Activated CD4-positive, alpha-beta T cell treated with anti-CD3 and anti-CD28 coated beads, Interleukin-2, amount 10 ng/mL, durations not matched to agents 24 days and 14 days (primary cell): ENCODE measurements at regions of chr10 and their contacts with region 1.

Region 1: DNA sequence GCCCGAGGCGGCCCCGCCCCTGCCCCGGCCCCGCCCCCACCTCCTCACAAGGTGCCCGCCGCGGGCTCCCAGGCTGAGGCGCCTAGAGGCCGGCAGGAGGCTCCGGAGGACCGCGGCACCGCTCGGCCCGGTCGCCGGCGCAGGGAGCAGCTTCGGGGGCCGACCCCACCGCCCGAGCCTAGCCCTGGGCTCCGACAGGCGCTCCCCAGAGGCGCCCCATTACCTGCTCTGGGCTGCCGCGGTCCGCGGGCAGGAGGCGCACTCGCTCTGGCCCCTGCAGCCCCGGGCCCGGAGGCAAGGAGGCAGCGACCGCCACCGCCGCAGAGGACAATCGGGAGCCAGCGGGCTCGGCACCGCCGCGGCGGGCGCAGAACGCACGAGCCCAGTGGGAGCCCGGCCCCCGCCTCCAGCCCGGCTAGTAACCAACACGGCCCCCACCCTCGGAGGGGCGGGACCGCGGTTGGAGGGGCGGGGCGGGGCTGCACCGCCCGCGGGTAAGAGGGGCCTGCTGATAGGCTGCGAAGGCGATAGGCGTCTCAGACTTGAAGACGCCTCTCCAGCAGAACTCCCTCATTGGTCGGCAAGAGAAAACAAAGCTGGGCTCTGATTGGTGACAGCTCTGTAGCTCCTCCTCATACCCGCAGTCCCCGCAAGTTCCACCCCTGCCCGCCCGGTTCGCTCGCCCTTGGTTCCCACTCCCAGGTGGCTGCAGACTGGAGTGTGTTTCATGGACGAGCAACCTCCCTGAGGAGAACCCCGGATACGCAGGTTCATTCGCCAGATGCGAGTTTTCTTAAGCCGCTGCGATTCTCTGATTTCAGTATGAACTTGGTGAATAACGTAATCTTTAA is at the start of gene MPP7:
- DNase-seq: peak; percentile 99
- H3K4me3 Mint-ChIP-seq: peak within 1 kb of the TSS; percentile 96
- H3K27ac Mint-ChIP-seq: peak within 1 kb of the TSS; percentile 82
- H3K4me1 Mint-ChIP-seq: peaks cover 29% of the 10 kb centered on the region
- H3K27me3 Mint-ChIP-seq: peaks cover 45% of the 10 kb centered on the region
- total RNA-seq, gene MPP7: 0.43 and 0.54 TPM in 2 replicates

Region 2: DNA sequence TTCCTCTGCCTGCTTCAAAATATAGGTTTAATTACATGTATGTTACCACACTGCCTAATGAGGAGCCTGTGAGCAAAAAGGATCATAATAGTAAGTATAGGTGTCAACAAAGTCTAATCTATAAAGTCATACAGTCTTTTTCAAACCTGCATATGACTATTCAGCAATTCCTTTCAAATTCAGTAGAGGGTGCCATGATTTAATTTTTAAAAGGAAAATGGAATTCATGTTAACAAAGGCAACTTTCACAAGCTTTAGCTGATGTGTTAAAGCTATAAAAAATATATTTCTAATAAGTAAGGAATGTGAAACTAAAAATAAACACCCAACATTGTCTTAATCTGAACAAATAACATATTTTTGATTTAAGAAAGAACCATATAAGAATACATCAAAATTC is 52.1 kb before region 1 on chr10:
- intact Hi-C with region 1: loop called (anchors 2 kb)
- DNase-seq: peak; percentile 41
- H3K4me3 Mint-ChIP-seq: no peak overlapping the region
- H3K27ac Mint-ChIP-seq: no peak overlapping the region
- H3K4me1 Mint-ChIP-seq: peaks cover 4% of the 10 kb centered on the region
- H3K27me3 Mint-ChIP-seq: peaks cover 4% of the 10 kb centered on the region

Region 3: DNA sequence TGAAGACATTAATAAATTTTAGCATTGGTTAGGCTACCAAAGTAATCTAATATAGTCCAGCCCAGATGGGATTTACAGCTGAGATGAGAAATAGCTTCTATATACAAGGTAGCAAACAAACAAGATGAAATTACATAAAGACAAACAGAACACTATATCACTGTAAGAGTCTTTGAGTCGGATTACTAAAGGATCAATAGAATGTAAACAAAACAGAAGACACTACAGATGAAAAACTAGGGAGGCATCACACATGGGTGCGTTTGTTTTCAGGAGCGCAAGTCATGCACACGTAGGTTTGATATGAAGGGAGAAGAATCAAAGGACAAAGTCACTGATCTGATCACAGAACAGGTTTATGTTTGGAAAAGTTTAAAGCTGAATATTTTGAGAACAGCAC is 26.5 kb before region 1 on chr10:
- intact Hi-C with region 1: no loop called
- DNase-seq: no peak
- H3K4me3 Mint-ChIP-seq: no peak overlapping the region
- H3K27ac Mint-ChIP-seq: no peak overlapping the region
- H3K4me1 Mint-ChIP-seq: no peaks in the 10 kb centered on the region
- H3K27me3 Mint-ChIP-seq: no peaks in the 10 kb centered on the region

Region 4: DNA sequence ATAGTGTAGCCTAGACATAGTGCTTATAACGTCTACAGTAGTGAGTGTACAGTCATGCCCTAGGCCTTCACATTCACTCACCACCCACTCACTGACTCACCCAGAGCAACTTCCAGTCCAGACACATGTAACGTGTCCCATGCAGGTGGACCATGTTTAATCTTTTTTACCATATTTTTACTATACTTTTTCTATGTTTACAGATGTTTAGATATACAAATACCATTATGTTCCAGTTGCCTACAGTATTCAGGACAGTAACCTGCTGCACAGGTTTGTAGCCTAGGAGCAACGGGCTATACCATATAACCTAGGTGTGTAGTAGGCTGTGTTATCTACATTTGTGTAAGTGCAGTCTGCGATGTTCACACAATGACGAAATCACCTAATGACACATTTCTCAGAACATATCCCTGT is 11.0 kb before region 1 on chr10:
- intact Hi-C with region 1: loop called (anchors 1 kb)
- DNase-seq: no peak
- H3K4me3 Mint-ChIP-seq: no peak overlapping the region
- H3K27ac Mint-ChIP-seq: no peak overlapping the region
- H3K4me1 Mint-ChIP-seq: peaks cover 15% of the 10 kb centered on the region
- H3K27me3 Mint-ChIP-seq: peaks cover 4% of the 10 kb centered on the region

Region 5: DNA sequence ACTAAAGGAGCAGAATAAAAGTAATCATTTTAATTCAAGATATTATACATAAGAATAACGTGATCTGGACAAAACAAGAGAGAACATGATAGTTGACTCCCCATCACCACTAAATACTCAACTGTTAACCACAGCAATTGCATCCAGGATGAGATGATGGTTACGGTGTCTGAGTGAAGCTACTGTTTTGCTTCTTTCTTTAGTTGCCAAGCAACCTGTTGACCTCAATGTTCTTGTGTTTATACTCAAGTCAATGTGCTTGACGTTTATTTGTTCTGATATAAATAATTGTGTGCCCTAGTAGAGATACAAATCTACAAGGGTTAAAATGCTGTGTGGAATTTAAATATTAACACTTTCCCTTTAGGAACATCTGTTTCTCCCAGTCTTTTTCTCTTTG is 31.4 kb after region 1 on chr10:
- intact Hi-C with region 1: loop called (anchors 1 kb)
- DNase-seq: peak; percentile 92
- H3K4me3 Mint-ChIP-seq: peak overlapping the region; percentile 91
- H3K27ac Mint-ChIP-seq: peak overlapping the region; percentile 100
- H3K4me1 Mint-ChIP-seq: peaks cover 46% of the 10 kb centered on the region
- H3K27me3 Mint-ChIP-seq: peaks cover 9% of the 10 kb centered on the region

Region 6: GRCh38 chr10:28367929-28368484 is 65.1 kb after region 1 on chr10:
- intact Hi-C with region 1: loop called (anchors 1 kb)
- DNase-seq: peak; percentile 91
- H3K4me3 Mint-ChIP-seq: peak overlapping the region; percentile 59
- H3K27ac Mint-ChIP-seq: peak overlapping the region; percentile 80
- H3K4me1 Mint-ChIP-seq: peaks cover 32% of the 10 kb centered on the region
- H3K27me3 Mint-ChIP-seq: no peaks in the 10 kb centered on the region